AG04450 (cell line): ENCODE measurements at regions of chr4 and their contacts with region 1.

Region 1: GRCh38 chr4:139656614-139657486 is 8.8 kb upstream of the MGST2 start:
- DNase-seq: peak; percentile 51
- H3K4me3 ChIP-seq: no peak overlapping the region
- H3K27ac ChIP-seq: no peak overlapping the region
- H3K27me3 ChIP-seq: no peaks in the 10 kb centered on the region
- CTCF ChIP-seq: peak; percentile 92

Region 2: GRCh38 chr4:139129206-139129605 is 527.6 kb before region 1 on chr4:
- CTCF ChIA-PET with region 1: no interaction called
- POLR2A ChIA-PET with region 1: no interaction called
- DNase-seq: no peak
- H3K4me3 ChIP-seq: no peak overlapping the region
- H3K27ac ChIP-seq: no peak overlapping the region
- H3K27me3 ChIP-seq: no peaks in the 10 kb centered on the region
- CTCF ChIP-seq: no peak

Region 3: GRCh38 chr4:139609647-139610046 is 47.2 kb before region 1 on chr4:
- CTCF ChIA-PET with region 1: interaction called, 232 read pairs
- POLR2A ChIA-PET with region 1: no interaction called
- DNase-seq: no peak
- H3K4me3 ChIP-seq: no peak overlapping the region
- H3K27ac ChIP-seq: no peak overlapping the region
- H3K27me3 ChIP-seq: no peaks in the 10 kb centered on the region
- CTCF ChIP-seq: 0 out of 2 replicates have a peak, but pooled peaks have one; percentile 2

Region 4: DNA sequence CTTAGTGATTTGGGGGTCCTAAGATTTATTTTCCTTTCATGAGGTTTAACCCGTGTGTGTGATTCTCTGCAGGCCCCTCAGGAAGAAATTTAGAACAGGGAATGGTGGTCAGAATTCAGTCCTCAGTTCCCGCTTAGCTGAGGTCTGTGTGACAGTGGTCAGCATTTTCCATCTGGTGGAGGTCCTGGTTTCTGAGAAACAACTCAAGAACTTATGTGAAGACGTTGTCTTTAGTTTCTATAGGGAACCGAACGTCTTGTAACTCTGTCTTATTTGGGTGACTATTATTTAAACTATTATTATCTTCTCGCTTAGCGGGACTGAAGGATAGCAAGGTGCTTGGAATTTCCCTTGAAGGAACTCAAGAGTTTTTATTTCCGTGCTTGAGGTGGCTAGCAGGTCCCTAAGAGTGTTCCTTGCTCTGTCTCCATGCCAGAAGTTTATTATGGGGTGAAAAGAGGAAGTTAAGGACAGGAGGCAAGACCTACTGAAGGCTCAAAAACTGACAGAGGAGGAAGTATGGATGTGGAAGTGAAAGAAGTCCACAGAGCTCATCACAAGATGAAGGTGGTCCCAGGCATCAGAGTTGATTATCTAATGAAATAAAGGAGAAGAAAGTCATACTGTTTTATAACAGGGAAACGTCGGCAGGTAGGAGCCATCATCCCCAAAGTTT is 18.2 kb after region 1 on chr4:
- CTCF ChIA-PET with region 1: interaction called, 11 read pairs
- POLR2A ChIA-PET with region 1: no interaction called
- DNase-seq: no peak
- H3K4me3 ChIP-seq: no peak overlapping the region
- H3K27ac ChIP-seq: no peak overlapping the region
- H3K27me3 ChIP-seq: no peaks in the 10 kb centered on the region
- CTCF ChIP-seq: no peak

Region 5: GRCh38 chr4:139704915-139705485 is 48.1 kb after region 1 on chr4:
- CTCF ChIA-PET with region 1: interaction called, 11 read pairs
- POLR2A ChIA-PET with region 1: interaction called, 6 read pairs
- DNase-seq: no peak
- H3K4me3 ChIP-seq: no peak overlapping the region
- H3K27ac ChIP-seq: no peak overlapping the region
- H3K27me3 ChIP-seq: no peaks in the 10 kb centered on the region
- CTCF ChIP-seq: peak; percentile 22; the same call in 1 of the 2 replicates

Region 6: GRCh38 chr4:139901531-139902320 is 244.9 kb after region 1 on chr4:
- CTCF ChIA-PET with region 1: no interaction called
- POLR2A ChIA-PET with region 1: no interaction called
- DNase-seq: no peak
- H3K4me3 ChIP-seq: peak overlapping the region; percentile 0
- H3K27ac ChIP-seq: no peak overlapping the region
- H3K27me3 ChIP-seq: no peaks in the 10 kb centered on the region
- CTCF ChIP-seq: no peak

Region 7: DNA sequence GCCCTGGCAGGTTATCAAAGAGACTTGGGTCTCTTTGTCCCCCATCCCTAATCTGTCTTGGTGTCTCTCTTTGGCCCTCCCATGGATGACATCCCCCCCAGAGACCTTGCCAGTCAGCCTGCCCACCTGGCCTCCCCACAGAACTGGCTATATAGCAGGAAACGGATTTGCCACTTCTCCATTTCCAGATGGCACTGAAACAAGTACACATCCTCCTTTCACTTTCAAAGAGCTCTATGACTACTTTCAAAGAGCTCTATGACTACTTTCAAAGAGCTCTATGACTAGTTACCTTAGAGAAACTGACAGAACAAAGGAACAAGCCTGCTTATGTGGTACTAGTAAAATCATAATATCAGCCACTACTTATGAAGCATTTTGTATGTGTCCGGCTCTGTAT is 321.8 kb after region 1 on chr4:
- CTCF ChIA-PET with region 1: no interaction called
- POLR2A ChIA-PET with region 1: no interaction called
- DNase-seq: no peak
- H3K4me3 ChIP-seq: no peak overlapping the region
- H3K27ac ChIP-seq: no peak overlapping the region
- H3K27me3 ChIP-seq: no peaks in the 10 kb centered on the region
- CTCF ChIP-seq: no peak

Region 8: DNA sequence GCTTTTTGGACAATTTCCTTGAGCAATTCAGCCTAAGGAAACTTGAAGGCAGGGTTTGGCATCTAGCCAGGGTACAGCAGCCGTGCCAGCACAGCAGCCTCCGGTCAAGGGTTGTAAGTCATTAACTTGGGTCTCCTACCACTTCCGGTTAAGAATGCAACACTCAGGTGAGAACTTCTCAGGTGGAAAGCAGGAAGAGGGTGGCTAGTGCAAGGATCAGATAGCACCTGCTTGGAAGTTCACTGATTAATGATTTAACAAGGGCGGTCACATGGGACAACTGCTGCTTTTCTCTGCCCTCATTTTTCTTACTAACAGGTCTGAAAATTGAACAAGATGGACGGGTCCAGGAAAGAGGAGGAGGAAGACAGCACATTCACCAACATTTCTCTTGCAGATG is 686.5 kb after region 1 on chr4:
- CTCF ChIA-PET with region 1: no interaction called
- POLR2A ChIA-PET with region 1: no interaction called
- DNase-seq: no peak
- H3K4me3 ChIP-seq: no peak overlapping the region
- H3K27ac ChIP-seq: no peak overlapping the region
- H3K27me3 ChIP-seq: peaks cover 9% of the 10 kb centered on the region
- CTCF ChIP-seq: no peak

Region 9: GRCh38 chr4:140609548-140610425 is 952.9 kb after region 1 on chr4:
- CTCF ChIA-PET with region 1: interaction called, 10 read pairs
- POLR2A ChIA-PET with region 1: no interaction called
- DNase-seq: peak; percentile 4
- H3K4me3 ChIP-seq: no peak overlapping the region
- H3K27ac ChIP-seq: no peak overlapping the region
- H3K27me3 ChIP-seq: peaks cover 5% of the 10 kb centered on the region
- CTCF ChIP-seq: peak; percentile 59